HCT116 (cell line): ENCODE measurements at regions of chr10 and their contacts with region 1.

Region 1: DNA sequence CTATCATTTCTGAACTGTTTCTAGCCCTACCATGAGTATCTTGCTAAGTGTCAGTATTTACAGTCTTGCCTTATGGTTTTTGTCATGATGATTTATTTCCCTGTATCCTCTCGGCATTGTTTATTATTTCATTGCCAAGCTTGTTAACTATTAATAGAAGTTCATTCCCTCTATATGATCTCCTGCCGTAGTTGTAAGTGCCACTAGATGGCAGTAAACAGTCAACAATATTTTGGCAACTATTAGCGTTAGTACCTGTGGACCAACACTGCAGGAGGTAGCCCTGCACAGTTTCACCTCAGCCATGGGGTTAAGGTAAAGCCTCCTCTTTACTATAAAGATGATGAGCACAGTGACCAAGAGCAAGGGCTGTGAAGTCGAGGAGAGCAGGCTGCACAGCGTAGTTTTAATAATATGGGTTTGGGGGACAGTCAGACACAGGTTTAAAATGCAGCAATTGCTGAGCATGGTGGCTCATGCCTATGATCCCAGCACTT is 26.1 kb upstream of the CCNJ start:
- DNase-seq: peak; percentile 51
- ATAC-seq: peak; percentile 100
- H3K4me3 ChIP-seq: no peak overlapping the region
- H3K27ac ChIP-seq: no peak overlapping the region
- H3K4me1 ChIP-seq: no peaks in the 10 kb centered on the region
- H3K27me3 ChIP-seq: no peaks in the 10 kb centered on the region
- CTCF ChIP-seq: peak; percentile 75 to 94 (median 78)
- POLR2A ChIP-seq: no peak
- RAD21 ChIP-seq: peak; percentile 88

Region 2: GRCh38 chr10:95998255-95998784 is 18.9 kb before region 1 on chr10:
- CTCF ChIA-PET with region 1: interaction called, 23 read pairs
- POLR2A ChIA-PET with region 1: no interaction called
- RAD21 ChIA-PET with region 1: no interaction called
- intact Hi-C with region 1: no loop called
- DNase-seq: no peak
- ATAC-seq: no peak
- H3K4me3 ChIP-seq: no peak overlapping the region
- H3K27ac ChIP-seq: no peak overlapping the region
- H3K4me1 ChIP-seq: no peaks in the 10 kb centered on the region
- H3K27me3 ChIP-seq: no peaks in the 10 kb centered on the region
- CTCF ChIP-seq: no peak
- POLR2A ChIP-seq: no peak
- RAD21 ChIP-seq: no peak

Region 3: DNA sequence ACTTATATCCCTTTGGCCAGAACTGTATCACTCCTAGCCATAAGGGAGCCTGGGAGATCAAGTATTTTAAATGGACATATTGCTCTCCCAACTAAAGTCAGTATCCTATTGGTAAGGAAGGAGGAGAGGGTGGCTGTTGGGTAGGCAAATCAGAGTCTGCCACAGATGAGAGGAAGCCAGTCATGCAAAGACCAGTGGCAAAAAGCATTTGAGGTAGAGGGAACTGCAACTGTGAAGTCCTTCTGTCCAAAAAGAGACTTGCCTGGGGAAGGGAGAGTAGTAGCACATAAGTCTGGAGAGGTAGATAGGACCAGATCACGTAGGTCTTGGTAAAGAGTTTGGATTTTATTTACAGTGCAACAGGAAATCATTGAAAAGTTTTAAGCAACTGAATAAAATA is 17.4 kb after region 1 on chr10:
- CTCF ChIA-PET with region 1: interaction called, 12 read pairs
- POLR2A ChIA-PET with region 1: no interaction called
- RAD21 ChIA-PET with region 1: no interaction called
- intact Hi-C with region 1: no loop called
- DNase-seq: no peak
- ATAC-seq: no peak
- H3K4me3 ChIP-seq: no peak overlapping the region
- H3K27ac ChIP-seq: no peak overlapping the region
- H3K4me1 ChIP-seq: no peaks in the 10 kb centered on the region
- H3K27me3 ChIP-seq: no peaks in the 10 kb centered on the region
- CTCF ChIP-seq: no peak
- POLR2A ChIP-seq: no peak
- RAD21 ChIP-seq: no peak

Region 4: GRCh38 chr10:96229568-96230030 is 212.4 kb after region 1 on chr10:
- CTCF ChIA-PET with region 1: interaction called, 16 read pairs
- POLR2A ChIA-PET with region 1: no interaction called
- RAD21 ChIA-PET with region 1: interaction called, 4 to 5 read pairs
- intact Hi-C with region 1: no loop called
- DNase-seq: peak; percentile 61
- ATAC-seq: peak; percentile 89
- H3K4me3 ChIP-seq: no peak overlapping the region
- H3K27ac ChIP-seq: no peak overlapping the region
- H3K4me1 ChIP-seq: peaks cover 0 to 6% of the 10 kb centered on the region in 2 experiments; a peak in 1 of 4 replicates
- H3K27me3 ChIP-seq: no peaks in the 10 kb centered on the region
- CTCF ChIP-seq: peak; percentile 97 to 99 (median 98)
- POLR2A ChIP-seq: no peak
- RAD21 ChIP-seq: peak; percentile 90

Region 5: DNA sequence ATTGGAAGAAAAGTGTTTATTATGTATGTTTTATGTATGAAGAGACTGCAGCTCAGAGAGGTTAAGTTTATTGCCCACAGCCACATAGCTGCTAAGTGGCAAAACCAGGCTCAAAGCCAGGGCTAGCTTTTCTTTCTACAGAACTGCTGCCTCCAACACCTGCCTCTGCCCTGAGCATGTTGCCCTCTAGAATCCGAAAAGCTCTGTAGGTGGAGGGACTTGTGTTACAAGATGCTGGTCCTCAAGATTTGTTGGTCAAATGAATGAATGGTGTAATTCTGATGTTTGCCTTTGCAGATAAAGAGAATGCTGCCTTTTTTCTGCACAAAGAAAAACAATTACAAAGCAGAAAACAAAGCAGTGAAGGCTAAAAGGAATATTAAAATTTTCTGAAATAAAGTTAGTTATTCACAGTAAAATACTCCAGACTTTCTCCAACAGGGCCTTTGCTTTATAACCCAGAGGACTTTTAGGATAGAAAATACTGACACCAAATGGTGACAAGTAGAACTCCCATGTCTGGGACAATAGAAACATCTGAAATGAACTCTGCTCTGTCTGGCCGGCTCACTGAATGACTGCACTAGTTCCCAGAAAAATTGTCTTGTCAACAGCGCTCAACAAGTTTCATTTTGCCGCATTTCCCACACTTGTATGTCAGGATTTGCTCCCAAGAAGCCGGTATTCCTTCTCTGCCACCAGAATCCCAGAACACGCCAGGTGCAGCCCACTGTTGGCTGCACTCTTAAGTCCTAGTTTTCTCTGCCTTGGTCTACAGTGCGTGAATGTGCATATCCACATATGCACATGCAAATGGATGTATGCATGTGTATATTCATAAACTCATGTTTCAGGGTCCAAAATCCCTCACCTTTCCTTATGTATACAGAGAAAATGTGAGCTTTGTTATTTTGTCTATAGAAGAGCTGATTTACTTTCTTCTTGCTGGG is 276.0 kb after region 1 on chr10:
- CTCF ChIA-PET with region 1: interaction called, 19 read pairs
- POLR2A ChIA-PET with region 1: no interaction called
- RAD21 ChIA-PET with region 1: interaction called, 3 to 5 read pairs
- intact Hi-C with region 1: loop called (anchors 2 kb)
- DNase-seq: peak; percentile 47
- ATAC-seq: peak; percentile 95
- H3K4me3 ChIP-seq: no peak overlapping the region
- H3K27ac ChIP-seq: no peak overlapping the region
- H3K4me1 ChIP-seq: peaks cover 0 to under 1% of the 10 kb centered on the region in 2 experiments; a peak in 1 of 4 replicates
- H3K27me3 ChIP-seq: peaks cover 7% of the 10 kb centered on the region; the same call in 1 of the 2 replicates
- CTCF ChIP-seq: peak; percentile 50 to 92 (median 67)
- POLR2A ChIP-seq: no peak
- RAD21 ChIP-seq: peak; percentile 86

Region 6: GRCh38 chr10:96334616-96335526 is 317.6 kb after region 1 on chr10:
- CTCF ChIA-PET with region 1: interaction called, 35 read pairs
- POLR2A ChIA-PET with region 1: no interaction called
- RAD21 ChIA-PET with region 1: no interaction called
- intact Hi-C with region 1: loop called (anchors 2 kb)
- DNase-seq: peak; percentile 13
- ATAC-seq: peak; percentile 89
- H3K4me3 ChIP-seq: no peak overlapping the region
- H3K27ac ChIP-seq: no peak overlapping the region
- H3K4me1 ChIP-seq: no peaks in the 10 kb centered on the region
- H3K27me3 ChIP-seq: peaks cover 7% of the 10 kb centered on the region; the same call in 1 of the 2 replicates
- CTCF ChIP-seq: peak; percentile 66 to 88 (median 84); a peak in 5 of 6 replicates
- POLR2A ChIP-seq: no peak
- RAD21 ChIP-seq: peak; percentile 70

Region 7: DNA sequence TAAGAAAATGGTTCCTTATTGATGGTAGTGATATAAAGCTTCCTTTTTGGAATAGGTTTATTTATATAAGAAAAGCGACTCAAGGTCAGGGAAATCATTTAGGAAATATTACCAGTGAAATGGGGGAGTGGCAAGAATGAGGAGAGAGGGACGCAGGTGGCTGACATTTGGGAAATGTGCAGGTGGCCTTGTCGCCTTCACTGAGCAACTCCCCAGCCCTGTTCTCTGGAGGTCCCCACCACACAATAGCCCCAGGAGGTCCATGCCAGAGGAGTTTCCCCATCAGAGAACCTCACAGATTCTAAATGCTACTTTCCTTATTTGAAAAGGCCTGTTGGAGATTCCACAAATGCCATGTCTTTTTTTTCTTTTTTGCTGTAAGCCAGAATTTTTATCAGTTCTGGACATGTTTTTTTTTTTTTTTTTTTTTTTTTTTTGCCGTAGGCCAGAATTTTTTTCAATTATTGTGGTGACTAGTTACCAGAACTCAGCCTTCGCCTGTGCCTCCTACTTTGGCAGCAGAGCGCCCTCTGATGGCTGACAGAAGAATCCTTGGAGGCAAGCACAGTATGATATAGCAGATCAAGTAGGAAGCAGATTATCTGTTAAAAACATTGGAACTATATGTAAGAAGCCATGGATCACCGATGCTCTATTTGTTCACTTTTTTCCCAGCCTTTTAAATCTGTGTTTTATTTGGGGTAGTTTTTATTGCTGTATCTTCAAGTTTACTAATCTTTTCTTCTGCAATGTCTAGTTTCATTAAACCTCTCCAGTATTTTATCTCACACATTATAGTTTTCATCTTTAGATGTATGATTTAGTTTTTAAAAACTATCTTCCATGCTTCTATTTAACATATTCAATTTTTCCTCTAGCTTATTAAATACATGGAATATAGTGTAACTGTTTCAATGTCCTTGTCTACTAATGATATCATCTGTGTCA is 323.0 kb after region 1 on chr10:
- CTCF ChIA-PET with region 1: interaction called, 35 read pairs
- POLR2A ChIA-PET with region 1: no interaction called
- RAD21 ChIA-PET with region 1: no interaction called
- intact Hi-C with region 1: loop called (anchors 2 kb)
- DNase-seq: peak; percentile 53
- ATAC-seq: peak; percentile 99
- H3K4me3 ChIP-seq: no peak overlapping the region
- H3K27ac ChIP-seq: no peak overlapping the region
- H3K4me1 ChIP-seq: no peaks in the 10 kb centered on the region
- H3K27me3 ChIP-seq: no peaks in the 10 kb centered on the region
- CTCF ChIP-seq: peak; percentile 79 to 96 (median 94)
- POLR2A ChIP-seq: no peak
- RAD21 ChIP-seq: peak; percentile 74